Activated CD4-positive, alpha-beta memory T cell treated with anti-CD3 and anti-CD28 coated beads for 36 hours (primary cell): ENCODE measurements at regions of chrX and their contacts with region 1.

Region 1: DNA sequence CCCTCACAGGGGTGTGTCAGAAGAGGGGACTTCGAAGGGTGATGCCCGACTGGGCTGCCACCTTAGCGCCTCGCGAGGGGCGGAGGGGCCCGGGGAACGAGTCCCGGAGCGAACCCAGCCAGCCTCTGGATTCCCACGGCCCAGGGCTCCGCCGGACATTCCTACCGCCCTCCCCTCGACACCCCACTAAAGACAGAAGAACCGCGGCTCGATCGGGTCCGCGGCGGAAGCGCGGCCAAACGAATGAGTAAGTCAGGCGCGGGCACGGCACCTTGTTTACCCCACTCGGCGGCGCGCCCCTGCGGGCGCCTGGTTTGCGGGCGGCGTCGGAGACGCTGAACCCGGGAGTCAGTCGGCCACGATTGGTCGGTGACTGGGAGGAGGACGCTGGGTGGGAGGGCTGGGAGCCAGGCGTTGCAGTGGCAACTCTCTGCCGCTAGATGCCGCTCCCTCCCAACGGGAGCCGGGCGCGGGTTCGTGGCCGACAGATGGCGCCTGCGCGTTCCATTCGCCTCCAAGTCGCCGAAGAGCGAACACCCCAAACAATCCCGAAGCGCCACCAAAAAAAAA is 1.4 kb upstream of the STAG2 start:
- DNase-seq: peak; percentile 94
- H3K4me3 Mint-ChIP-seq: peak overlapping the region; percentile 92
- H3K27ac Mint-ChIP-seq: peak overlapping the region; percentile 99
- H3K4me1 Mint-ChIP-seq: peaks cover 17% of the 10 kb centered on the region
- H3K27me3 Mint-ChIP-seq: no peaks in the 10 kb centered on the region

Region 2: GRCh38 chrX:123673813-123674212 is 286.3 kb before region 1 on chrX:
- CTCF ChIA-PET with region 1: no interaction called
- POLR2A ChIA-PET with region 1: no interaction called
- intact Hi-C with region 1: no loop called
- DNase-seq: no peak
- H3K4me3 Mint-ChIP-seq: no peak overlapping the region
- H3K27ac Mint-ChIP-seq: no peak overlapping the region
- H3K4me1 Mint-ChIP-seq: no peaks in the 10 kb centered on the region
- H3K27me3 Mint-ChIP-seq: no peaks in the 10 kb centered on the region

Region 3: DNA sequence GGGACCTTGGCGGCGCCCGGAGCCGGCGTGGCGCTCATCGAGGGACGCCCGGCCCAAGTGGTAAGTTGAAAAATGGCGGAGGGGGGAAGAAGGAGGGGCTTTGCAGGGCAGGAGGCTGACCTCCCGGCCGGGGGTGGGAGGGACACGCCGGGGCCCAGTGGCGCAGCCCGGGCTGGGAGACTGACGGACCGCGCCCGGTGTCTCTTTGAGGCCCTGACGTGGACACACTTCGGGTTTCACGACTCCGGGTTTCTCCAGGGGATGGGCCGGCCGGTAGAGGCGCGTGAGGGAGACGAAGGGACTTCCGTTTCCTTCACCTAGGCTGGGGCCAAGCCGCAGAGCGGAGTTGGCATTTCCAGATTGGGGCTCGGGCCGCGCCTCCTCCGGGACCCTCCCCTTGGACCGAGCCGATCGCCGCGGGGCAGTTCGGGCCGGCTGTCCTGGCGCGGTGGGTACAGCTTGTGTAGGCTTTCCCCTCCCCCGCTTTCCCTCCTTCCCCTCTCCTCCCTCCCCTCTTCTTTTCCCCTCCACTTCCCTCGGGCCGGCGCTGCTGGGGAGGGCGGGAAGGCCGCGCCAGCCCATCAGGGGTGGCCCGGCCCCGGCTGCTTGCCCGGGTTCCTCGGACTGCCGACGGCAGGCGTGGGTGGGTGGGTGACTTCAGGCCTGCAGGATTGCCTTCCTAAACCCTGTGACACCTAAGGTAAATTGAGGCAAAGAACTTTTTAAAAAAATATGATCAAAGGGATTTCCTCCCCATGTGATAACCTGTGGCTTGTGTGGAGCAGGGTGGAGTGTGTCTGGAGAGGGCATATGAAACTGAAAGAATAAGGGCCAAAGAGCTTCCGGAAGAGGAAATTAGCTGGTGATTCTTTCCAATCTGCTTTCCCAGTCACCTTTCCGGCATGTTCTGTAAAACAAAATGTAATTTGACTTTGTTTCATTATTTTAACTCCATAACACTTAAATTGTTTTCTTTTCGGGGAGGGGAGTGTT is 100.0 kb before region 1 on chrX and contains the start of gene XIAP:
- CTCF ChIA-PET with region 1: no interaction called
- POLR2A ChIA-PET with region 1: interaction called, 3 read pairs
- intact Hi-C with region 1: loop called (anchors 2 kb)
- DNase-seq: peak; percentile 81
- H3K4me3 Mint-ChIP-seq: peak within 1 kb of the TSS; percentile 84
- H3K27ac Mint-ChIP-seq: peak within 1 kb of the TSS; percentile 93
- H3K4me1 Mint-ChIP-seq: peaks cover 19% of the 10 kb centered on the region
- H3K27me3 Mint-ChIP-seq: no peaks in the 10 kb centered on the region
- total RNA-seq, gene XIAP: 33.9 to 36.1 TPM

Region 4: DNA sequence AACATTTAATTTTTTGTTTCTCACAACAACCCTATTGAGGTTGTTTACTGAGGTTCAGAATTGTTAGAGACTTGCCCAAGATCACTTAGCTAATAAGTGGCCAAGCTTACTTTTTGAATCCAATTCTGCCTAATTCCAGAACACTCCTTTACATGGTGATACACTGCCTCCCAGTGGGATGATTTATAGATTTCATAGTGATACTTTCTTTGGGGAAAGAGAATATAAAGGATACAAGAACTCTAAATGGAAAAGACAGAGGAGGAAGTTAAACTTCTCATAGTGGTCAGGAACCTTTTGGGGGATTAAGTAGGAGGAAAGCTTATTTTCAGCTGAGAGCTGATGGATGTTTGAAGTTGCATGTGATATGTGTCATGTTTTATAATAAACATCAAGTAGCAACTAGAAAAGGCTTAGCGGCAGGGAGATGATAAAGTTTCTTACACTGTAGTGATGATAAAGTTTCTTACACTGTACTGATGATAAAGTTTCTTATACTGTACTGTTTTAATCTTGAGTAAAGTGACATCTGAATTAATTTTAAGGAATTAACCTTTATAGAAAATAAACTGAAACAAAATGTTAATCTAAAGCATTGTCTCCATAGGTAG is 16.7 kb after region 1 on chrX:
- CTCF ChIA-PET with region 1: interaction called, 3 read pairs
- POLR2A ChIA-PET with region 1: no interaction called
- intact Hi-C with region 1: loop called (anchors 1 kb)
- DNase-seq: no peak
- H3K4me3 Mint-ChIP-seq: no peak overlapping the region
- H3K27ac Mint-ChIP-seq: peak overlapping the region; percentile 24
- H3K4me1 Mint-ChIP-seq: peaks cover 36% of the 10 kb centered on the region
- H3K27me3 Mint-ChIP-seq: no peaks in the 10 kb centered on the region

Region 5: GRCh38 chrX:124086411-124086810 is 126.3 kb after region 1 on chrX:
- CTCF ChIA-PET with region 1: no interaction called
- POLR2A ChIA-PET with region 1: interaction called, 10 read pairs
- intact Hi-C with region 1: loop called (anchors 1 kb)
- DNase-seq: peak; percentile 56
- H3K4me3 Mint-ChIP-seq: peak overlapping the region; percentile 7
- H3K27ac Mint-ChIP-seq: peak overlapping the region; percentile 74
- H3K4me1 Mint-ChIP-seq: peaks cover 28% of the 10 kb centered on the region
- H3K27me3 Mint-ChIP-seq: no peaks in the 10 kb centered on the region

Region 6: DNA sequence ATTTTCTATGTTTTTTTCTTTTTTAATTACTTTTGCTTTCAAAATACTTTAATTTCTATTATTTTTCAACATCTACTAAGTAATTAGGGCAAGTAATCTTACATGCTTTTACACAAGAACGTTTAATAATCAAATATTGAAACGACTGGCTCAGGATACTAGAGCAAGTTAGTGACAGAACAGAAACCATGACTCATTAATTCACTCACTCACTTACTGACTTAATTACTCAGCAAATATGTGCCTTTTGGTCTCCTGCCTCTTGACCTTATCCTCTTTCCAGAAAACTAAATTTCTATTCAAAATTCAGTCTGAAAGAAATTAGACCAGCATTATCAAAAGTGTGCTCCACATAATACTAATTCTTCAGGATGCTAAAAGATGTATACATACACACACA is 1044.7 kb after region 1 on chrX:
- CTCF ChIA-PET with region 1: no interaction called
- POLR2A ChIA-PET with region 1: no interaction called
- intact Hi-C with region 1: loop called (anchors 5 kb)
- DNase-seq: no peak
- H3K4me3 Mint-ChIP-seq: no peak overlapping the region
- H3K27ac Mint-ChIP-seq: no peak overlapping the region
- H3K4me1 Mint-ChIP-seq: peaks cover 5% of the 10 kb centered on the region
- H3K27me3 Mint-ChIP-seq: no peaks in the 10 kb centered on the region